WTC11 (cell line): ENCODE measurements at regions of chr22 and their contacts with region 1.

Region 1: DNA sequence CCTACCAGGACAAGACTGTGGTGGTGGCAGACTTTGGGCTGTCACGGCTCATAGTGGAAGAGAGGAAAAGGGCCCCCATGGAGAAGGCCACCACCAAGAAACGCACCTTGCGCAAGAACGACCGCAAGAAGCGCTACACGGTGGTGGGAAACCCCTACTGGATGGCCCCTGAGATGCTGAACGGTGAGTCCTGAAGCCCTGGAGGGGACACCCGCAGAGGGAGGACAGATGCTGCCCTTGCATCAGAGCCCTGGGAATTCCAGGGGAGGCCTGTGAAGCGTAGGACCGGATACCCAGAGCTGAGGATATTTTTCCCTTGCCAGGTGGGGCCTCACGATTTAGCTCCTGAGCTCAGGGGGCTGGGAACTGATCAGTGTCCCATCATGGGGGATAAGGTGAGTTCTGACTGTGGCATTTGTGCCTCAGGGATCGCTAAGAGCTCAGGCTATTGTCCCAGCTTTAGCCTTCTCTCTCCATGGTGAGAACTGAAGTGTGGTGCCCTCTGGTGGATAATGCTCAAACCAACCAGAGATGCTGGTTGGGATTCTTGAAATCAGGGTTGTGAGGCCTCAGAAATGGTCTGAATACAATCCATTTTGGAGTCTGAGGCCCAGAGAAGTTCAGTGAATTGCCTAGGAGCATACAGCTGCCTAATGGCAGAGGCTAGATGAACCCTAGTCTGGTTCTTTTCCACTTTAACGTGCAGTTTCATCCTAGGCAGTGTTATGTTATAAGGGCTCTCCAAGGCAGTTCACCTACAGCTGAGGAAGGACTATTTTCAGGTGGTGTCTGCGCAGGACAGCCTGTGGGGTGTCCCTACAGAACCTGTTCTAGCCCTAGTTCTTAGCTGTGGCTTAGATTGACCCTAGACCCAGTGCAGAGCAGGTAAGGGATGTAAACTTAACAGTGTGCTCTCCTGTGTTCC is 19.5 kb downstream of the PIK3IP1 start:
- DNase-seq: peak; percentile 67
- ATAC-seq: peak; percentile 60
- H3K4me3 Mint-ChIP-seq: no peak overlapping the region
- H3K27ac Mint-ChIP-seq: peak overlapping the region; percentile 89
- H3K4me1 Mint-ChIP-seq: peaks cover 20% of the 10 kb centered on the region
- H3K27me3 Mint-ChIP-seq: no peaks in the 10 kb centered on the region
- CTCF ChIP-seq: peak; percentile 55

Region 2: DNA sequence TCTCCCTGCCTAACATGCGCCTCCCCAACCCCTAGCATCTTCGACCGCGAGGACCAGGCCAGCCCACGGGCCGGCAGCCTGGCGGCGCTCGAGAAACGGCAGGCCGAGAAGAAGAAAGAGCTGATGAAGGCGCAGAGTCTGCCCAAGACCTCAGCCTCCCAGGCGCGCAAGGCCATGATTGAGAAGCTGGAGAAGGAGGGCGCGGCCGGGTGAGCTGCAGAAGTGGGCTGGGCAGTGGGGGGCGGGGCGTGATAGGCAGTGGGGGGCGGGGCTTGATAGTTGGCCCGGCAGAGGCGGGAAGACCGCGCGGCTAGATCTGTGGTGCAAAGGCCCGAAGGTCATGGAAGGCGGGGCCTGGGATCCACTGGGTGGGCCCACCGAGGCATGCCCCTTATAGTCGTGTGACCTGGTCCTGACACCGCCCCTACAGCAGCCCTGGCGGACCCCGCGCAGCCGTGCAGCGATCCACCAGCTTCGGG is 174.1 kb before region 1 on chr22:
- CTCF ChIA-PET with region 1: interaction called, 15 read pairs
- POLR2A ChIA-PET with region 1: no interaction called
- DNase-seq: peak; percentile 80
- ATAC-seq: peak; percentile 90
- H3K4me3 Mint-ChIP-seq: peak overlapping the region; percentile 65
- H3K27ac Mint-ChIP-seq: no peak overlapping the region
- H3K4me1 Mint-ChIP-seq: peaks cover 17% of the 10 kb centered on the region
- H3K27me3 Mint-ChIP-seq: peaks cover 5% of the 10 kb centered on the region; the same call in 1 of the 2 replicates
- CTCF ChIP-seq: no peak

Region 3: GRCh38 chr22:31199183-31199582 is 73.6 kb before region 1 on chr22:
- CTCF ChIA-PET with region 1: interaction called, 28 read pairs
- POLR2A ChIA-PET with region 1: no interaction called
- DNase-seq: no peak
- ATAC-seq: peak; percentile 73
- H3K4me3 Mint-ChIP-seq: no peak overlapping the region
- H3K27ac Mint-ChIP-seq: no peak overlapping the region
- H3K4me1 Mint-ChIP-seq: no peaks in the 10 kb centered on the region
- H3K27me3 Mint-ChIP-seq: no peaks in the 10 kb centered on the region
- CTCF ChIP-seq: no peak

Region 4: GRCh38 chr22:31218565-31219262 is 54.1 kb before region 1 on chr22:
- CTCF ChIA-PET with region 1: interaction called, 123 read pairs
- POLR2A ChIA-PET with region 1: no interaction called
- DNase-seq: no peak
- ATAC-seq: no peak
- H3K4me3 Mint-ChIP-seq: no peak overlapping the region
- H3K27ac Mint-ChIP-seq: peak overlapping the region; percentile 93
- H3K4me1 Mint-ChIP-seq: peaks cover 15% of the 10 kb centered on the region
- H3K27me3 Mint-ChIP-seq: no peaks in the 10 kb centered on the region
- CTCF ChIP-seq: no peak

Region 5: GRCh38 chr22:31248138-31248745 is 24.5 kb before region 1 on chr22:
- CTCF ChIA-PET with region 1: interaction called, 53 read pairs
- POLR2A ChIA-PET with region 1: interaction called, 5 read pairs
- DNase-seq: peak; percentile 80
- ATAC-seq: peak; percentile 96
- H3K4me3 Mint-ChIP-seq: peak overlapping the region; percentile 64
- H3K27ac Mint-ChIP-seq: peak overlapping the region; percentile 92
- H3K4me1 Mint-ChIP-seq: peaks cover 36% of the 10 kb centered on the region
- H3K27me3 Mint-ChIP-seq: no peaks in the 10 kb centered on the region
- CTCF ChIP-seq: no peak

Region 6: GRCh38 chr22:31290494-31291471 is 18.0 kb after region 1 on chr22:
- CTCF ChIA-PET with region 1: interaction called, 57 read pairs
- POLR2A ChIA-PET with region 1: interaction called, 3 read pairs
- DNase-seq: peak; percentile 92
- ATAC-seq: peak; percentile 88
- H3K4me3 Mint-ChIP-seq: peak overlapping the region; percentile 74
- H3K27ac Mint-ChIP-seq: peak overlapping the region; percentile 71
- H3K4me1 Mint-ChIP-seq: peaks cover 26% of the 10 kb centered on the region
- H3K27me3 Mint-ChIP-seq: peaks cover 25% of the 10 kb centered on the region
- CTCF ChIP-seq: no peak

Region 7: GRCh38 chr22:31354515-31354914 is 81.7 kb after region 1 on chr22:
- CTCF ChIA-PET with region 1: no interaction called
- POLR2A ChIA-PET with region 1: no interaction called
- DNase-seq: no peak
- ATAC-seq: no peak
- H3K4me3 Mint-ChIP-seq: no peak overlapping the region
- H3K27ac Mint-ChIP-seq: no peak overlapping the region
- H3K4me1 Mint-ChIP-seq: peaks cover 7% of the 10 kb centered on the region
- H3K27me3 Mint-ChIP-seq: no peaks in the 10 kb centered on the region; the same call in 1 of the 2 replicates
- CTCF ChIP-seq: no peak